Caco-2 (cell line): ENCODE measurements at regions of chr3 and their contacts with region 1.

Region 1: DNA sequence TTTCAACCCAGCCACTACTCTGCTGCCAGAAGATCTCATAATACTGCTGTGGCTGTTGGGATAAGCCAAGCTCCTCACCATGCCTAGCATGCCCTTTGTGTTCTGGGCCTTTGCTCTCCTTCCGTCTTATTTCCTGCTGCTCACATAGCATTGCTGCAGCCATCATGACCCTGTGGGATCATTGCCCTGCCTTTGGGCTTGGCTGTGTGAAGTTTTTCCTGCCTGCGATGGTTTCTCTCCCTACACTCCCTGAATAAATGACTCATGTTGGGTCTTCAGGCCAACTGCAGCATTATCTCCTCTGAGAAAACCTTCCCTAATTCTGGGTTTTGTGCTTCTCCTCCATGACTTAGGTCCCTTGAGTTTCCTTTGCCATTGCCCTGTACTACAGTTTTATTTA is 20.8 kb upstream of the TRA2B start:
- DNase-seq: no peak
- H3K4me3 ChIP-seq: no peak overlapping the region
- H3K4me3 Mint-ChIP-seq: no peak overlapping the region
- H3K27ac Mint-ChIP-seq: no peak overlapping the region
- H3K4me1 ChIP-seq: peaks cover 1% of the 10 kb centered on the region; the same call in 1 of the 2 replicates
- H3K4me1 Mint-ChIP-seq: no peaks in the 10 kb centered on the region
- H3K27me3 ChIP-seq: no peaks in the 10 kb centered on the region
- H3K27me3 Mint-ChIP-seq: no peaks in the 10 kb centered on the region
- CTCF ChIP-seq: no peak

Region 2: DNA sequence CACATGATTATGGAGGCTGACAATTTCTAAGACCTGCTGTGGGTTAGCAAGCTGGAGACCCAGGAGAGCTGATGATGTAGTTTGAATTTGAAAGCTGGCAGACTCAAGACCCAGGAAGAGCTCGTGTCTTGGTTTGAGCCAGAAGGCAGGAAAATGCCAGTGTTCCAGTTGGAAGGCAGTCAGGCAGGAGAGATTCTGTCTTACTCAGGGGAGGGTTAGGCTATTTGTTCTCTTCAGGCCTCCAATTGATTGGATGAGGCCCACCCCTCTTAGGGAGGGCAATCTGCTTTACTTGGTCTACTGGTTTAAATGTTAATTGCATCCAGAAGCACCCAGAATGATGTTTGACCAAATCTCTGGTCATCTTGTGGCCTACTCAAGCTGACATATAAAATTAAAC is 93.4 kb before region 1 on chr3:
- CTCF ChIA-PET with region 1: no interaction called
- POLR2A ChIA-PET with region 1: no interaction called
- intact Hi-C with region 1: no loop called
- DNase-seq: no peak
- H3K4me3 ChIP-seq: no peak overlapping the region
- H3K4me3 Mint-ChIP-seq: no peak overlapping the region
- H3K27ac Mint-ChIP-seq: no peak overlapping the region
- H3K4me1 ChIP-seq: no peaks in the 10 kb centered on the region
- H3K4me1 Mint-ChIP-seq: peaks cover 11% of the 10 kb centered on the region
- H3K27me3 ChIP-seq: no peaks in the 10 kb centered on the region; the same call in 1 of the 2 replicates
- H3K27me3 Mint-ChIP-seq: no peaks in the 10 kb centered on the region
- CTCF ChIP-seq: no peak

Region 3: GRCh38 chr3:185942907-185943759 is 15.5 kb before region 1 on chr3:
- CTCF ChIA-PET with region 1: interaction called, 75 read pairs
- POLR2A ChIA-PET with region 1: interaction called, 7 read pairs
- intact Hi-C with region 1: no loop called
- DNase-seq: peak; percentile 87 to 88
- H3K4me3 ChIP-seq: no peak overlapping the region
- H3K4me3 Mint-ChIP-seq: no peak overlapping the region
- H3K27ac Mint-ChIP-seq: peak overlapping the region; percentile 13
- H3K4me1 ChIP-seq: peaks cover 15% of the 10 kb centered on the region
- H3K4me1 Mint-ChIP-seq: peaks cover 20% of the 10 kb centered on the region
- H3K27me3 ChIP-seq: no peaks in the 10 kb centered on the region
- H3K27me3 Mint-ChIP-seq: no peaks in the 10 kb centered on the region
- CTCF ChIP-seq: peak; percentile 92 to 97

Region 4: DNA sequence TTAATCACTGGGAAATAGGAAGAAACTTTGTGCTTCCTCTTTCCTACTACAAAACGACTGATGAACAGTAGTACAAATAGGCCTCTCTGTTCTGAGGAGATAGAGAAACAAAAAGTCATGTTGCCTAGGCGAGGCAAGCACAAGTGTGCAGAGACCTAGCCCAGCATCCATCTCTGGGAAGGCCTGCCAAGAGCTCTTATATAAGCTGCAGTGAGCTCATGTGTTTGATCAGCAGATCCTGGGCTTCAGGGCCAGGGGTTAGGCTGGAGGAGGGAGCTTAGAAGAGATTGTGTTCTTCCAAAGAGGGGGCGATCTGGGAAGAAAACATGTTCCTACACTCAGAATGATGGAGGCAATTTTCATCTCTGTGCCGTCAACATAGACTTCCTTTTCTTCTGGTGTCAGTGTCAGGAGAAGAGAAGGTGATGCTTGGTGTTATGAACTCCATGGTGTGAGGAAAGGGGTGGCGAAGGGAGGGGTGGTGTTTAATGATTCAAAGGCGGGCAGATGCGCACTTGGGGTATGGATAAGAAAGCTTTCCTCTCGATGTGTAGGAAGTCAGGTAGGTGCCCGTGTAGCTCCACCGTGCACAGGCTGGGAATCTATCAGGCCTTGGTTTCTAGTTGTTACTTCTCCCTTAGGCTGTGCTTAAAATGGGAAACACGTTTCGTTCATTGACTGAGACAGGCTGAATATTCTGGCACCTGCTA is 179.8 kb after region 1 on chr3:
- CTCF ChIA-PET with region 1: no interaction called
- POLR2A ChIA-PET with region 1: no interaction called
- intact Hi-C with region 1: no loop called
- DNase-seq: no peak
- H3K4me3 ChIP-seq: no peak overlapping the region
- H3K4me3 Mint-ChIP-seq: no peak overlapping the region
- H3K27ac Mint-ChIP-seq: no peak overlapping the region
- H3K4me1 ChIP-seq: no peaks in the 10 kb centered on the region
- H3K4me1 Mint-ChIP-seq: peaks cover 12% of the 10 kb centered on the region
- H3K27me3 ChIP-seq: no peaks in the 10 kb centered on the region
- H3K27me3 Mint-ChIP-seq: no peaks in the 10 kb centered on the region
- CTCF ChIP-seq: no peak

Region 5: GRCh38 chr3:186534113-186534669 is 575.6 kb after region 1 on chr3:
- CTCF ChIA-PET with region 1: no interaction called
- POLR2A ChIA-PET with region 1: interaction called, 11 read pairs
- intact Hi-C with region 1: no loop called
- DNase-seq: no peak
- H3K4me3 ChIP-seq: no peak overlapping the region
- H3K4me3 Mint-ChIP-seq: no peak overlapping the region
- H3K27ac Mint-ChIP-seq: no peak overlapping the region
- H3K4me1 ChIP-seq: no peaks in the 10 kb centered on the region
- H3K4me1 Mint-ChIP-seq: no peaks in the 10 kb centered on the region
- H3K27me3 ChIP-seq: no peaks in the 10 kb centered on the region
- H3K27me3 Mint-ChIP-seq: no peaks in the 10 kb centered on the region
- CTCF ChIP-seq: no peak